Posterior cingulate gyrus (tissue), 11 donors: ENCODE measurements at regions of chr1 and their contacts with region 1.

Region 1: DNA sequence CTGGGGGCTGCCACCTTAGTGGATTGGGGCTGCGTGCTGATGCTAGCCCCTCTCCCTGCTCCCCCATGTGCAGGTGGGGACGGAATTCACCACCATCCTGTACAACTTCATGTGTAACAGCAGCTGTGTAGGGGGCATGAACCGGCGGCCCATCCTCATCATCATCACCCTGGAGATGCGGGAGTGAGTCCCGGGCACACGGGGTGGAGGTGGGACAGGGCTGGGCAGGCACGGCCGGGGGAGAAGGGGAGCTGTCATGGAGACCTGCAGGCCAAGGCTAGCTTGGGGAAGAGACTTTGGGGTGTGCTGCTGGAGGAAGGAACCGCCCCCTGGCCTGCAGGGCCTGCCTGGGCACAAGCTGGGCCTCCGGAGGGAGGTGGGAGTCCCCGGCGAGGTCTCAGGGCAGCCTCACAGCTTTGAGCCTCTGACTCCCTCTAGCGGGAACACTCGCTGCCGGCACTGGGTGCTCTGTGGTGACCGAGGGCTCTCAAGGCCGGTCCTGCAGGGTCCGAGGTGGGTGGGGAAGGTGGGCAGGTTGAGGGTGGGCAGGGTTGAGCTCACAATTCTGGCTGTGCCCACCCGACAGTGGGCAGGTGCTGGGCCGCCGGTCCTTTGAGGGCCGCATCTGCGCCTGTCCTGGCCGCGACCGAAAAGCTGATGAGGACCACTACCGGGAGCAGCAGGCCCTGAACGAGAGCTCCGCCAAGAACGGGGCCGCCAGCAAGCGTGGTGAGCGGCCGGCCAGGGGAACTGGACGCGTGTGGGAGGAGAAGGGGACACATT is 25.0 kb upstream of the CCDC27 start:
- DNase-seq: peak in 6 of 10 donors; percentile 48 to 93 (median 55)

Region 2: GRCh38 chr1:3624200-3625136 is 102.8 kb before region 1 on chr1 and contains the start of gene TPRG1L:
- intact Hi-C with region 1: loop called (anchors 10 kb)
- DNase-seq: peak; percentile 96 to 100 (median 99)

Region 3: GRCh38 chr1:3695326-3696217 is 31.7 kb before region 1 on chr1:
- intact Hi-C with region 1: loop called (anchors 1 kb)
- DNase-seq: peak in 9 of 10 donors; percentile 41 to 94 (median 71)

Region 4: DNA sequence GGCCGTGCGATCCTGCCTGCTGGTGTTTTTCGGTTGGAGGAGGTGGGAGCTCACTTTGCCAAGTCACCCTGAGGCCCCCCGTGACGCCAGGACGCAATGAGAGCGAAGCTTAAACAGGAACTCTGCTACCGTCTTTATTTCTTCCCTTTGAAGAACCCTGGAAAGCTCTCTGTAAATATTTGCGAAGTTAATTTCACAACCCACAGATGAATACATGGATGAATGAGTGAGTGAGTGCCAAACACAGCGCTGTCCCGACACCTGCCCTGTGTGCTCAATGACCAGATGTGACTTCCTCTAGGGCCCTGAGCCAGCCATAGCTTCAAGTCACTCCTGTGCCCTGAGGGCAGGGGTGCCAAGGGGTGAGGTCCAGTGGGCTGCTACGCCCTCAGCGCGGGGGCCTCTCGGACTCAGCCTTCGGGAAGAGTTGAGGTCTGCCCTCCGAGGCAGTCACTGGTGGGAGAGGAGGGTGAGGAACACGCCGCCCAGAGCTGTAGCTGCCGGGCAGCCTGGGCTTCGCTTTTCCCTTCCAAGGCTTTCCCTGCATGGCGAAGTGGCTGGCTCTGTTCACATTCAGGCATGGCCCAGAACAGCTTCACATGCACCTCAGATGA is 215.7 kb after region 1 on chr1:
- intact Hi-C with region 1: no loop called
- DNase-seq: peak in 2 of 10 donors; percentile 55 to 85